Dorsolateral prefrontal cortex (tissue), 120 donors: ENCODE measurements at regions of chr4 and their contacts with region 1.

Region 1: GRCh38 chr4:151718984-151719955 is 41.5 kb downstream of the GATB start:
- DNase-seq: peak in 4 of 10 donors; percentile 49 to 71 (median 58)
- H3K4me3 ChIP-seq: peak overlapping the region in 2 of 59 donors; percentile 3 to 20
- H3K27ac ChIP-seq: peak overlapping the region in 55 of 59 donors; percentile 5 to 93 (median 82)
- H3K27me3 ChIP-seq: no peaks in the 10 kb centered on the region
- CTCF ChIP-seq: no peak

Region 2: GRCh38 chr4:151658959-151659600 is 60.2 kb before region 1 on chr4:
- intact Hi-C with region 1: no loop called
- DNase-seq: no peak
- H3K4me3 ChIP-seq: no peak overlapping the region
- H3K27ac ChIP-seq: peak overlapping the region in 25 of 59 donors; percentile 11 to 82 (median 47)
- H3K27me3 ChIP-seq: no peaks in the 10 kb centered on the region
- CTCF ChIP-seq: no peak

Region 3: DNA sequence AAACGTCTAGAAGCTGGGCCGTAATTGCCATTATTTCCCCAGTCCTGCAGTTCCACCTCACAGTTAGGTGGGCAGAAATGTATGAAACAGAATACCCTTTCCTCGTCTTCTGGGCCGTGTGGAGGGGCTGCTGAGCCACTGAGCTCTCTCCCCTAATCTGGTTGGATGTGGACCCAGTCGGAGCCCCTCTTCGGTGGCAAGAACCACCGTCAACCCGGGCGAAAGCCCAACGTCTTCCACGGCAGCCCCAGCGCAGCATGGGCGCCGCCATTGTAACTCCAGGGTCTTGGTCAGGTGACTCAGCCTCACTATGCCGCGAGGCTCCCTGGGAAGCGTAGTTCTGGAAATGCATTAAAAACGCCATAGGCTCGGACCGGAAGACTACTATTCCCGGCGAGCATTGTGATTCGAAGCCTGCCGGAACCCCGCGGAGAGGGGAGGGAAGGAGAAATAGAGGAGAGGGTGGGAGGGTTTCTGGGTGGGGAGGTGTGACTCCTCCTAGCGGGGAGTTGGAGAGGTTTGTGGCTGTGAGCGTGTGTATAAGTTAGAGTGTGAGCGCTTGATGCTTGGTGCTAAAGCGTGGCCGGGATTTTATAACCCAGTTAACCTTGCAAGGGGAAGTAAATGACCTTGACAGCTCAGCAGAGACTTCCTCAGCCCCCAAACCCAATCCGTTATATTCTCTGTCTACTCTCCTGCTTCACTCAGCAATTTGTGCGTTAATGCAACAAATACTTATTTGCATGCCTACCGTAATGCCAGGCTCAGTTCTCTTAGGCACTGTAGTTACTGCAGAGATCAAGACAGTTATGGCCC is 41.6 kb after region 1 on chr4 and contains the start of gene GATB:
- intact Hi-C with region 1: loop called (anchors 2 to 5 kb)
- DNase-seq: peak; percentile 91 to 99 (median 96)
- H3K4me3 ChIP-seq: peak within 1 kb of the TSS; percentile 61 to 98 (median 85)
- H3K27ac ChIP-seq: peak within 1 kb of the TSS in 57 of 59 donors; percentile 7 to 93 (median 81)
- H3K27me3 ChIP-seq: peaks cover 0 to 4% (median 0%) of the 10 kb centered on the region in 45 donors
- CTCF ChIP-seq: peak in 55 of 56 donors; percentile 32 to 82 (median 69)
- total RNA-seq, gene GATB: 36.7 to 100 (median 63.1) TPM